ENCODE measurements at regions of chrX and their contacts with region 1.

Region 1: DNA sequence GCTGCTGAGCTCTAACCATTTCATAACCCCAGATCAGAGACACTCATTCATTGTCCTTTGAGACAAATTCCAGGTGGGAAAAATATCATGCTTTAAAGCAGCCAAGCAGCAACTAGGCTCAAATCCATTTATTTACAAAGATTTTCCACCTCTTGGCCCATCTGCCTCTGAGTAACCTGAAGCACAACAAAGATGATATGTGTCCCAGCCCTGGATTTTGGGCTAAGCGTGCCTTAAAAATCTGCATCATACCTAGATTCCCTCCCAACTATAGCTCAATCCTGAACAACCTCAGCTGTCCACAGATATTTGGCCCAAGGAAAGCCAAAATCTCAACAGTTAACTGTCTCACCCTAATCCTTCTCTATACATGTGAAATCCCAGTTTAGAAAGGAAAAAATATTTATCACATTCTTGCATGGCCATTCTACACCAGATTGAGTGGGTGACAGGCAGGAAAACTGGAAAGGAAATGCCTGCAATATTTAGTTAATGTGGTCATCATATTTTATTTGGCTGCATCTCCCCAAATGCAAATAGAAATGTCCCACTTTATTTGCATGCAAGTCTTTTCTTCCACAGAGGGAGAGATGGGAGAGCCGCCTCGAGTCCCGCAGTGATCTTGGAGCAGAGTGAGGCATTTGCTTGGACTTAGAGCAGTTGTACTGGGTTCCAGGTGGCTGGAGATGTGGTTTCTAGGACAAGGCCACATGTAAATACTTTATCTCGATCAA is 146.4 kb upstream of the EOLA2 start:
- DNase-seq: peak; percentile 81
- H3K4me3 ChIP-seq: no peak overlapping the region
- H3K27ac ChIP-seq: peak overlapping the region; percentile 90
- H3K4me1 ChIP-seq: peaks cover 27% of the 10 kb centered on the region
- H3K27me3 ChIP-seq: no peaks in the 10 kb centered on the region
- CTCF ChIP-seq: no peak
- POLR2A ChIP-seq: no peak

Region 2: GRCh38 chrX:149962859-149963757 is 121.6 kb before region 1 on chrX:
- CTCF ChIA-PET with region 1: interaction called, 9 read pairs
- POLR2A ChIA-PET with region 1: no interaction called
- dilution Hi-C with region 1: no loop called
- intact Hi-C with region 1: loop called (anchors 10 kb)
- DNase-seq: peak; percentile 59
- H3K4me3 ChIP-seq: no peak overlapping the region
- H3K27ac ChIP-seq: no peak overlapping the region
- H3K4me1 ChIP-seq: no peaks in the 10 kb centered on the region
- H3K27me3 ChIP-seq: no peaks in the 10 kb centered on the region
- CTCF ChIP-seq: peak; percentile 54 to 60
- POLR2A ChIP-seq: no peak

Region 3: DNA sequence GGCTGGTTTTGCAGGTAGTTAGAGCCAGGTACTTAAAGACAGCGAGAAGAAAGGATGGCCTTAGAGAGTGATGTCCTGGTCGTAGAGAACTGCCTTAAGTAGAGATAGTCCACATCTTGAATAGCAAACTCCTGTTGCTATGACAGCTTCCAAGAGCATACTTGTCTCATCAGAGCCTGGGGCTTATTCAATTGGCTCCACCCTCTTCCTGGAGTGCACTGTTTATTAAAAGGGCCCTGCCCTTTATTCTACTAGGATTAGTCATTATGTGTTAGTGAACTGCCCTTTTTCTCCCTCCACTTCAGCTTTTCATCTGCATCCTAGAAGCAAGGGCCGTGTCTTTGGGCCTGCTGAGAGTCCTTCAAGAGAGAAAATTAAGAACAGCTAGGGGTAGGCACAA is 51.9 kb before region 1 on chrX:
- CTCF ChIA-PET with region 1: no interaction called
- POLR2A ChIA-PET with region 1: no interaction called
- dilution Hi-C with region 1: no loop called
- intact Hi-C with region 1: loop called (anchors 5 kb)
- DNase-seq: peak; percentile 40
- H3K4me3 ChIP-seq: no peak overlapping the region
- H3K27ac ChIP-seq: no peak overlapping the region
- H3K4me1 ChIP-seq: peaks cover 34% of the 10 kb centered on the region
- H3K27me3 ChIP-seq: no peaks in the 10 kb centered on the region
- CTCF ChIP-seq: no peak
- POLR2A ChIP-seq: no peak

Region 4: DNA sequence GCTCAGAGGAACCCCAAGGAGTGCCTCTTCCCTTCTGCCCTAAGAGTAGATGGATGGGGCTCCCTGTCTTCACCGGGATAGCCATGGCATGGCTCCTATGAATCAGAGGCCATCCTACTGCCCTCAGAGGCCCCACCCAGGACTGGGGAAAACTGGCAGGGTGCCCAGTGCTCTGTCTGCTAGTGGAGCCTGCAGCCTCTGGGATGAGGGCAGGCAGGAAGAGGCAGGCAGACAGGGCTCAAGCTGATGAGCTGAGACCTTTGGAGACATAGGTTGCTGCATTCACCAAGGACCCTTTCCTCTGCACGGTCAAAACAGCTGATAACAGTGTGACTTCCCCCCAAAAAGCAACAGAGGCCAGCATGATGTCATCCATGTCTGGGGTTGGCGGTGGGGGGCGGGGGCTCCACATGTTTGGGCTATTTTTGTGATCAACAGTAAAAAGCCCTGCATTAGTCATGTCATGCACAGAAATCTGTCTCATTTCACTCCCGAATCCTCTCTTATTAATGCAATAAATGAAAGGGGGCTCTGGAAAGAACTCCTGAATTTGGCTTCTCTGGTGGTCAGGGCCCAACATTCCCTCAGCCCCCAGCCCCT is 70.9 kb after region 1 on chrX:
- CTCF ChIA-PET with region 1: no interaction called
- POLR2A ChIA-PET with region 1: no interaction called
- dilution Hi-C with region 1: no loop called
- intact Hi-C with region 1: loop called (anchors 10 kb)
- DNase-seq: peak; percentile 15
- H3K4me3 ChIP-seq: no peak overlapping the region
- H3K27ac ChIP-seq: no peak overlapping the region
- H3K4me1 ChIP-seq: no peaks in the 10 kb centered on the region
- H3K27me3 ChIP-seq: no peaks in the 10 kb centered on the region
- CTCF ChIP-seq: no peak
- POLR2A ChIP-seq: no peak

Region 5: GRCh38 chrX:150508451-150509367 is 424.0 kb after region 1 on chrX:
- CTCF ChIA-PET with region 1: no interaction called
- POLR2A ChIA-PET with region 1: no interaction called
- dilution Hi-C with region 1: no loop called
- intact Hi-C with region 1: loop called (anchors 10 kb)
- DNase-seq: peak; percentile 61
- H3K4me3 ChIP-seq: no peak overlapping the region
- H3K27ac ChIP-seq: peak overlapping the region; percentile 89
- H3K4me1 ChIP-seq: peaks cover 56% of the 10 kb centered on the region
- H3K27me3 ChIP-seq: no peaks in the 10 kb centered on the region
- CTCF ChIP-seq: no peak
- POLR2A ChIP-seq: no peak